Heart left ventricle (tissue), 16 donors: ENCODE measurements at regions of chr1 and their contacts with region 1.

Region 1: DNA sequence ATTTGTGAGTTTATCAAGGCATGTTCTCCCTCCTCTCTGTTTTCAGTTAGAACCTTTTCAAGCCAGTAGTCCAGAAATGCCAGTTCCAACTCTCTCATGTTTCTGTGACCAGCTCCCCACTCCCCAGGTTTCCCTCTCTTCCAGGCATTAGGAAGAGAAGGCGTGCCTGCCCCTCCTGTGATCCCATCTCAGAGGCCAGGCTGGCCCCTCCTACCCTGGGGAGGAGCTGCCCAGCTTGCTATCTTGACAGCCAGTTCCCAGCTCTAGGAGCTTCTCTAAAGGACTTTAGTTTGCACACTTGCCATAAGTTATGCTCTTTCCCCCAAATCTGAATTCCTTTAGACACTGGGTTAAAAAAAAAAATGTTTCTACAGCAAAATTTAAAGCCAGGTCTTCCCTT is 8.9 kb downstream of the HYI start:
- DNase-seq: peak in 1 of 5 donors; percentile 14
- ATAC-seq: peak in 2 of 4 donors; percentile 26 to 42
- H3K4me3 ChIP-seq: no peak overlapping the region
- H3K27ac ChIP-seq: no peak overlapping the region
- H3K4me1 ChIP-seq: peaks cover 0 to 18% (median 0%) of the 10 kb centered on the region in 12 donors
- H3K27me3 ChIP-seq: no peaks in the 10 kb centered on the region
- CTCF ChIP-seq: no peak
- POLR2A ChIP-seq: no peak

Region 2: DNA sequence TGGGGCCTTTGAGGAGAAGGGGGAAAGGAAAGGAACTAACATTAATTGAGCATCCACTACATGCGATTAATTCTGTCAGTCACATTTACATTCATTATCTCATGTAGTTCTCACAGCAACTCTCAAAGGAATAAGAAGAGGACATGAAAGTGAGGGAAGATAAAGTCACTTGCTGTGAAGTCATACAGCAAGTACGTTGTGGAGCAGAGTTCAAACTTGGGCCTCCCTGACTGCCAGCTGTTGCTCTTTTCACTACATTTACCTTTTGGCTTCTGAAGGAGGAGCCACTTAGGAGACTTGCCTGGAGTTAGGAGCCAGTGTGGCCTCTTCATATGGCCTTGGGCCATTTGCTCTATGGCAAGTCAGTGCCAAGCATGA is 592.2 kb before region 1 on chr1:
- intact Hi-C with region 1: loop called in 1 of 10 experiments (anchors 5 kb)
- DNase-seq: no peak
- ATAC-seq: peak in 1 of 4 donors; percentile 7
- H3K4me3 ChIP-seq: no peak overlapping the region
- H3K27ac ChIP-seq: peak overlapping the region in 1 of 12 donors; percentile 1
- H3K4me1 ChIP-seq: peaks cover 0 to 13% (median 4%) of the 10 kb centered on the region in 12 donors
- H3K27me3 ChIP-seq: no peaks in the 10 kb centered on the region
- CTCF ChIP-seq: no peak
- POLR2A ChIP-seq: no peak

Region 3: DNA sequence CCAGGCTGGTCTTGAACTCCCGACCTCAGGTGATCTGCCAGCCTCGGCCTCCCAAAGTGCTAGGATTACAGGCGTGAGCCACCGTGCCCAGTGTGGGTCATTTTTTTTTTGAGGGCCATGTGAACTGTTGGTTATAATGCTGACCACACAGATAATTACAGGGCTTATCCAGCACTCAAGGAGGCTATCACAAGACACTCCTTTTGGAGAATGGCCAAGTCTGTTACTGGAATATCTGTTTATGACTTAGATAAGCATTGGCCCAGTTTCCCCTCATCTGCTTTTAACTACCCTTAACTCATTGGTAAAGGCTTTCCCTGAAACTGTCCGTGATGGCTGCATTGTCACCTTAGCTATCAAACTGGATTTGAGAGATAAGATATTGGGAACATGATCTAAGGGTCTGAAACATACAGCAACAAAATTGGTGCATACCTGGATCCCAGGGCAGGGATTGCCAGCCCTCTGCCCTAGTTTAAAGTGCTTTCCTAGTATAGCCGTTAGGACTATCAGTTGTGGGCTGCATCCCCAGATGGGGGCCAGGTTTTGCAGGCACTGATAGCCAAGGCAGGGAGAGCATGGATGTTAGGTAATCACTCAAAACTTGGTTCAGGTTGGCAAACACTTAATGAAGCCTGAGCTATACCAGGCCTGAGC is 39.5 kb before region 1 on chr1:
- intact Hi-C with region 1: no loop called
- DNase-seq: no peak
- ATAC-seq: peak in 3 of 4 donors; percentile 31 to 39 (median 33)
- H3K4me3 ChIP-seq: no peak overlapping the region
- H3K27ac ChIP-seq: no peak overlapping the region
- H3K4me1 ChIP-seq: peaks cover 0 to 11% (median 2%) of the 10 kb centered on the region in 12 donors
- H3K27me3 ChIP-seq: no peaks in the 10 kb centered on the region
- CTCF ChIP-seq: no peak
- POLR2A ChIP-seq: no peak